ENCODE measurements at regions of chr20 and their contacts with region 1.

Region 1: DNA sequence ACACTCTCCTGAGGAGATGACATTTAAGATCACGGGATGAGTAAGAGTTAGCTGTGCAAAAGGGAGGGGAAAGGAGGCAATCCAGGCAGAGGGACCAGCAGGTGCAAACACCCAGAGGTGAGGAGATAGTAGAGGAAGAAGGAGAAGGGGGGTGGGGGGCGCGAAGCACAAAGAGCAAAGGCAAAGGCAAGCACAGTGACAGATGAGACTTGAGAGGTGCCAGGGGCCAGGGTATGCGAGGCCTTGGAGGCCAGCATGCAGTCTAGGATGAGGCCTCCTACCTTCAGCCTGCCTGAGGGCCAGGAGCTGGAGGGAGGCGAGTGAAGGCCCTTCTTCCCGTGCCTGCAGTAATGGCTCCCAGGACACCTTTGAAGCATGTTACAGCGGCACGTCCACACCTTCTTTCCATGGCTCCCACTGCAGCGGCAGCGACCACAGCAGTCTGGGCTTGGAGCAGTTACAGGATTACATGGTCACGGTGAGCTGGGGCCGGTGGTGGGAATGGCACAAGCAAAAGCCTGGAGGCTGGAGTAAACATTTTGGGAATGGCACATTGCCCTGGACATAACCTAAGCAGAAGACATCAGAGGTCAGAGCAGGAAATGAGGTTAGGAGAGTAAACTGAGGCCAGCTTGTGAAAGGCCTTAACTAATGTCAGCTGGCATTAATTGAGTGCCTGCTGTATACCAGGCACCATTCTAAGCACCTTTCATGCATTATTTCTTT is 18.6 kb downstream of the CCM2L start:
- ATAC-seq: peak in 6 of 8 experiments; percentile 38 to 83 (median 76)
- H3K4me3 ChIP-seq: peak overlapping the region; percentile 4 to 20 (median 18)
- H3K27ac ChIP-seq: peak overlapping the region in 1 of 2 donors; percentile 22
- H3K4me1 ChIP-seq: peaks cover 0 to 4% of the 10 kb centered on the region in 2 donors

Region 2: DNA sequence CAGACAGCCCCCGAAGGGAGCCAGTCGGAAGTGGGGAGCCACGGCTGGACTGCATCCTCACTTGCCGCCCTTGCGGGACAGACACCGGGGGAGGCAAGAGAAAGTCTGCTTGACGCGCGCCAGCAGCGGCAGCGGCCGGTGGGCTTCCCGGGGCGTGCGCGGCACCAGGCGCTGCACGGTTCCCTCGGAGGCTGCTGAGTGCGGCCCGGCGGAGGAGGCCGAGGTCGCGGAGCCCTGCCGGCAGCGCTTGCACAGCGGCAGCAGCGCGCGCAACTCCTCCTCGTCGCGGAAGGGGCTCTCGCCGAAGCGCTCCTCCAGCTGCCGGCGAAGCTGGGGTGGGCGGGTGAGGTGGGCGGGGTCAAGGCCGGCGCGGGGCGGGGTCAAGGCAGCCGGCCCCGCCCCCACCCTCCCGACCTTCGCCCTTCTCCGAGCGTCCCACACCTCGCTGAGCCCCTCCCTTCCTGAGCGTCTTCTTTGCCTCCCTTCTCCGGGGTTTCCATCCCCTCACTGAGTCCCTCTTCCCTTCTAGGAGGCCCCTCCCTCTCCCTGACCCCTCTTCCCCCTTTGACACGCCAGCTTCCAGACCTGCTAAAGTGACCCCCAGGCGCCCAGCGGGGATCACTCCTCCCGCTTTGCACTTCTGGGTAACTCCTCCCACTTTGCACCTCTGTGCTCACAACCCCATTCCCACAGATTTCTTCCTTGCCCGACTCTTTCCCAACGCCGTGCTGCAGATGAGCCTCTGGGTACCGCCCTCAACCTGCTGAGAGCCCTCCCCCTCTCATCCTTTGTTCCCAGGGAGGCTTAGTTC is 167.3 kb before region 1 on chr20:
- in situ Hi-C with region 1: loop called in 1 of 9 experiments (anchors 10 kb)
- ATAC-seq: peak; percentile 67 to 94 (median 84)
- H3K4me3 ChIP-seq: peak overlapping the region; percentile 42 to 61 (median 45)
- H3K27ac ChIP-seq: peak overlapping the region; percentile 82 to 87
- H3K4me1 ChIP-seq: peaks cover 16 to 24% of the 10 kb centered on the region in 2 donors

Measured in motor neuron (in vitro differentiated cells).